ENCODE measurements at regions of chr3 and their contacts with region 1.

Region 1: DNA sequence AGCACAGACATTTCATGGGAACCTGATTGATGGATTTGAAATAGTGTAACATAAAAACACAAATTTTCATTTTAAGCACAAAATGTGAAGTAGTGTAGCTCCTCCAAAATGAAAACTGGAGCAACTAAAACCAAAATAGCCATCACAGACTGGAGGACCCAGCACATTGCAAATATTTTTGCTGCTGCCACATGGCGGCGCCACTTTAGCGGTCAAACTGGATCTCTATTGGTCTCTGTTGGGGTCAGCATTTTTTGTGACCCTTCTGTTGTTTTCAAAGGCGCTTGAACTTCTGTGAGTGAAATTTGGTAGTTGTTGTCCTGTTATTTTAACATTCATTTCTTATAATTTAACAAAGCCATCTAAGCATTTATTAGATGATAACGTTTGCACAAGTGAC is 259.9 kb downstream of the IL20RB start:
- DNase-seq: no peak
- ATAC-seq: no peak
- H3K4me3 ChIP-seq: no peak overlapping the region
- H3K27ac ChIP-seq: no peak overlapping the region
- H3K4me1 ChIP-seq: no peaks in the 10 kb centered on the region
- H3K27me3 ChIP-seq: no peaks in the 10 kb centered on the region
- CTCF ChIP-seq: no peak
- POLR2A ChIP-seq: no peak

Region 2: GRCh38 chr3:137180220-137180619 is 37.5 kb before region 1 on chr3:
- in situ Hi-C with region 1: no loop called
- intact Hi-C with region 1: no loop called
- DNase-seq: no peak
- ATAC-seq: no peak
- H3K4me3 ChIP-seq: no peak overlapping the region
- H3K27ac ChIP-seq: no peak overlapping the region
- H3K4me1 ChIP-seq: no peaks in the 10 kb centered on the region
- H3K27me3 ChIP-seq: no peaks in the 10 kb centered on the region
- CTCF ChIP-seq: no peak
- POLR2A ChIP-seq: no peak

Region 3: GRCh38 chr3:137191133-137191923 is 26.4 kb before region 1 on chr3:
- in situ Hi-C with region 1: no loop called
- intact Hi-C with region 1: loop called (anchors 2 kb)
- DNase-seq: peak; percentile 7 to 22
- ATAC-seq: peak in 1 of 2 donors; percentile 39
- H3K4me3 ChIP-seq: no peak overlapping the region
- H3K27ac ChIP-seq: no peak overlapping the region
- H3K4me1 ChIP-seq: no peaks in the 10 kb centered on the region
- H3K27me3 ChIP-seq: no peaks in the 10 kb centered on the region
- CTCF ChIP-seq: no peak
- POLR2A ChIP-seq: no peak

Region 4: GRCh38 chr3:137231126-137231525 is 13.4 kb after region 1 on chr3:
- in situ Hi-C with region 1: no loop called
- intact Hi-C with region 1: no loop called
- DNase-seq: no peak
- ATAC-seq: no peak
- H3K4me3 ChIP-seq: no peak overlapping the region
- H3K27ac ChIP-seq: no peak overlapping the region
- H3K4me1 ChIP-seq: no peaks in the 10 kb centered on the region
- H3K27me3 ChIP-seq: no peaks in the 10 kb centered on the region
- CTCF ChIP-seq: no peak
- POLR2A ChIP-seq: no peak

Region 5: GRCh38 chr3:137438561-137438960 is 220.8 kb after region 1 on chr3:
- in situ Hi-C with region 1: no loop called
- intact Hi-C with region 1: no loop called
- DNase-seq: no peak
- ATAC-seq: no peak
- H3K4me3 ChIP-seq: no peak overlapping the region
- H3K27ac ChIP-seq: no peak overlapping the region
- H3K4me1 ChIP-seq: no peaks in the 10 kb centered on the region
- H3K27me3 ChIP-seq: no peaks in the 10 kb centered on the region
- CTCF ChIP-seq: no peak
- POLR2A ChIP-seq: no peak

Measured in gastrocnemius medialis (tissue), 4 donors.